Common myeloid progenitor, CD34-positive (primary cell): ENCODE measurements at regions of chr20 and their contacts with region 1.

Region 1: GRCh38 chr20:40741507-40742106 is 52.6 kb upstream of the MAFB start:
- DNase-seq: peak; percentile 37 to 68 (median 59)
- H3K4me3 ChIP-seq: no peak overlapping the region
- H3K27ac ChIP-seq: no peak overlapping the region
- H3K4me1 ChIP-seq: no peaks in the 10 kb centered on the region
- H3K27me3 ChIP-seq: peaks cover 0 to 38% (median 7%) of the 10 kb centered on the region in 5 experiments

Region 2: GRCh38 chr20:40689943-40690835 is 51.4 kb before region 1 on chr20:
- CTCF ChIA-PET with region 1: no interaction called
- POLR2A ChIA-PET with region 1: no interaction called
- DNase-seq: peak; percentile 74 to 85 (median 82)
- H3K4me3 ChIP-seq: peak overlapping the region in 6 of 7 experiments; percentile 47 to 77 (median 67)
- H3K27ac ChIP-seq: no peak overlapping the region
- H3K4me1 ChIP-seq: peaks cover 0 to 36% (median 27%) of the 10 kb centered on the region in 4 experiments
- H3K27me3 ChIP-seq: peaks cover 9 to 100% (median 63%) of the 10 kb centered on the region in 5 experiments

Region 3: DNA sequence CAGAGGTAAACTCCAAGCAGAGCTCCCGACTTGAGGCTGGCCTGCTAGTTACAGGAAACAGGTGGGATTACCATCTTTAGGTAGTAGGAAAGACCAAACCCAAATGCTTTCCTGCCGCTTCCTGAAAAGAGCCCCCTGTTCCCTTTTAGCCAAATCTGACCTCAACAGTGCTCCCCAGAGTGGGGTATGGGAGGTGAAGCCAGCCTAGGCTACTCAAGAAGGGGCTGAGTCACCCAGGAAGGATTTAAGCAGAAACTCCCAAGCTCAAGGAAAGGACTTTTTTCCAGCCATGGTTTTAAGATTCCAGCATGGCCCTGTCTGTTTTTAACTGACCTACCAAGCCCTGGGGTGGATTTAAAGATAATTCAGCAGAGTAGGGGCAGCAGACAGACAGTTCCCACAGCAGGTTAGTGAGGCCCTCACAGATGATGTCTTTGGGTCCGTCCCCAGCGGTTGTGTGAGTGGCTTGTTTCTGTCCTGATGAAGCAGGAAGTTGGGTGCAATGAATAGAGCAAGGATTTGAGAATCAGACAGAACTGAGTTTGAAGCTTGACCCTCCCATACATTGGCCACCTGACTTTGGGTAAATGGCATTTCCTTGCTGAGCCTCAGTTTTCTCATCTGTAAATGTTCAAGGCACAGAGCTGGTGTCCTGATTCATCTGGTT is 24.3 kb after region 1 on chr20:
- CTCF ChIA-PET with region 1: interaction called, 12 read pairs
- POLR2A ChIA-PET with region 1: no interaction called
- DNase-seq: peak in 2 of 3 donors; percentile 16 to 25
- H3K4me3 ChIP-seq: peak overlapping the region in 1 of 7 experiments; percentile 5
- H3K27ac ChIP-seq: no peak overlapping the region
- H3K4me1 ChIP-seq: peaks cover 0 to 31% (median 16%) of the 10 kb centered on the region in 4 experiments
- H3K27me3 ChIP-seq: no peaks in the 10 kb centered on the region

Region 4: GRCh38 chr20:40945754-40946450 is 204.3 kb after region 1 on chr20:
- CTCF ChIA-PET with region 1: interaction called, 39 read pairs
- POLR2A ChIA-PET with region 1: no interaction called
- DNase-seq: peak; percentile 40 to 69 (median 57)
- H3K4me3 ChIP-seq: no peak overlapping the region
- H3K27ac ChIP-seq: no peak overlapping the region
- H3K4me1 ChIP-seq: peaks cover 0 to 27% (median 9%) of the 10 kb centered on the region in 4 experiments
- H3K27me3 ChIP-seq: no peaks in the 10 kb centered on the region

Region 5: GRCh38 chr20:40962730-40963504 is 221.3 kb after region 1 on chr20:
- CTCF ChIA-PET with region 1: interaction called, 58 read pairs
- POLR2A ChIA-PET with region 1: no interaction called
- DNase-seq: peak; percentile 58 to 80 (median 72)
- H3K4me3 ChIP-seq: peak overlapping the region in 1 of 7 experiments; percentile 14
- H3K27ac ChIP-seq: no peak overlapping the region
- H3K4me1 ChIP-seq: peaks cover 0 to 15% (median 8%) of the 10 kb centered on the region in 4 experiments
- H3K27me3 ChIP-seq: no peaks in the 10 kb centered on the region